HEK293T (cell line): ENCODE measurements at regions of chr10 and their contacts with region 1.

Region 1: DNA sequence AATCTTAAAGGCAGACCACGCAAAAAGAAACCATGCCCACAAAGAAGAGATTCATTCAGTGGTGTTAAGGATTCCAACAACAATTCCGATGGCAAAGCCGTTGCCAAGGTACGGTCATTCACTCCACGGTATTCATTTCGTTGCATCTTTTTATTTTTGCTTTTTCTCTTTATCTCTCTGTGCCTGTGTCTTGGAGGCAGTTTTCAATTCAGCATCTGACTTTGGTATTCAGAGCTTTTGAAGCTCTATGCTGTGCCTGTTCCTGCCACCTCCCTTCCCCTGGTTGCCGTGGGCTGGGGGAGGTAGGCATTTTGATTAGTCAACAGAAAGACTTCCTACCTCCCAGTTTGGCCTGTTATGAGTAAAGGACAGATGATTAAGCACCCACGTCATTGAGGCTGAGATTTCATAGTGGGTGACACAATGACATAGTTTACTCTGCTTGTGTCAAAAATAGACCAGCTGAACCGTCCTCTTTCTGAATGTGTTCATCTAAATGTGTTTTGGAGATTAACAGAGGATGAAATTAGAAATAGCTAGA is 149.5 kb downstream of the ARID5B start:
- DNase-seq: no peak

Region 2: DNA sequence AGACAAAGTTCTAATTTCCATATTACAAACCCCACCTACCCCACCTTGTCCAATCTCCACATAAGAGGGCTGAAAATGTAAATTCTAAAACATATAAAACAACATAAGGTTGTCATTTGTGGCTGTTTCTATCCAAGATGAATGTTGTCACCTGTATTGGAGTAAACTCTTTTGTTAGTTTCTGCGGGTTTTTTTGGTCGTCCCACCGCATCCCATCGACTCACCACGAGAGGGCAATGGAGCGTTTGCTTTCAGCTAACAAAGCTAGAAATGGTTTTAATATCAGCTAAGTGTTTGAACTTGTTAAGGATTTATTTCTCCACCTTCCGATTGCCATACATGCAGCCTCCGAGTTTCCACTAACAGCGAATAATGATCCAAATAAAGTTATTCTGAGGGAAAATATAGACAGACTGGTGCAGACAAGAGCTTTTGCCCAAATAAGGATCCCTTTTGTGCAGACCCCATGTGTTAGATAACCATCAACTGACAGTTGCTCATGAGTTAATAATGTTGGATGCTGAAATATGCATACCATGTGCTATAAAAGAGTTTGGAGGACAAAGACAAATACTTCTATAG is 12.3 kb before region 1 on chr10:
- CTCF ChIA-PET with region 1: interaction called, 21 read pairs
- POLR2A ChIA-PET with region 1: interaction called, 15 read pairs
- DNase-seq: peak; percentile 61